ENCODE measurements at regions of chr14 and their contacts with region 1.

Region 1: GRCh38 chr14:105203057-105203531 is 22.0 kb upstream of the NUDT14 start:
- DNase-seq: peak; percentile 93

Region 2: GRCh38 chr14:105223260-105223659 is 20.2 kb after region 1 on chr14:
- intact Hi-C with region 1: no loop called
- DNase-seq: no peak

Region 3: GRCh38 chr14:105248368-105248756 is 45.3 kb after region 1 on chr14 and contains the start of gene BTBD6:
- intact Hi-C with region 1: loop called in 1 of 2 experiments (anchors 5 kb)
- DNase-seq: peak; percentile 95
- total RNA-seq, gene BTBD6: 38.4 to 42.4 TPM

Region 4: DNA sequence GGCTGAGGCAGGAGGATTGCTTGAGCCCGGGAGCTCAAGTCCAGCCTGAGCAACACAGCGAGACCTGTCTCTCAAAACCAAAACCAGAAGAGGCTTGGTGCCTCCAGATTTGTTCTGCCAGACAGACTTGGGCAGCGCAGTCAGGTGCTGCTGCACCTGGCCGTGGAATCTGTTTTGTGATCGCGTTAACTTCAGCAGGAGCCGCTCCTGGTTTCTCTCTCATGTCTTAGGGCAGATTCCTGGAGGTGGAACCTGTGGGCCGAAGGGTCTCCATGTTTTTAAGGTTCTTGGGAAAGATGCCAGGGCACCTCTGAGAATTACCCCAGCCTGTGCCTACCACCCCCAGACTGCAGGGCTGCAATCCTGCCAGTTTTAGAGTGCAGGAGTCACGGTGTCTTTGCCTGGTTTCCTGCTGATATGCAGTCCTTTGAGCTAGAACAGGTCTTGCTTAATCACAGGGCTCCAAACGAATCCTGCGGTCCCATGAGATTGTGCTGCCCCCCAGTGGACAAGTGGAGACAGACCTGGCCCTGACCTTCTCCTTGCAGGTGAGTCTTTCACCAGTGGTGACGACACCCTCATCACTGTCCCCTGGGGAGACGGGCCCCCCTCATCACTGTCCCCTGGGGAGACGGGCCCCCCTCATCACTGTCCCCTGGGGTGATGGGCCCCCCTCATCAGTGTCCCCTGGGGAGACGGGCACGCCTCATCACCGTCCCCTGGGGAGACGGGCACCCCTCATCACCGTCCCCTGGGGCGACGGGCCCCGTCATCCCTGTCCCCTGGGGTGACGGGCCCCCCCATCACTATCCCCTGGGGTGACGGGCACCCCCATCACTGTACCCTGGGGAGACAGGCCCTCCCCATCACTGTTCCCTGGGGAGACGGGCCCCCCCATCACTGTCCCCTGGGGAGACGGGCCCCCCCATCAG is 149.1 kb after region 1 on chr14:
- intact Hi-C with region 1: loop called (anchors 5 kb)
- DNase-seq: peak; percentile 93

Region 5: GRCh38 chr14:105414456-105415371 is 211.6 kb after region 1 on chr14:
- intact Hi-C with region 1: no loop called
- DNase-seq: peak; percentile 93

Region 6: GRCh38 chr14:105709281-105710118 is 506.4 kb after region 1 on chr14:
- intact Hi-C with region 1: no loop called
- DNase-seq: peak; percentile 67